ENCODE measurements at regions of chr22 and their contacts with region 1.

Region 1: DNA sequence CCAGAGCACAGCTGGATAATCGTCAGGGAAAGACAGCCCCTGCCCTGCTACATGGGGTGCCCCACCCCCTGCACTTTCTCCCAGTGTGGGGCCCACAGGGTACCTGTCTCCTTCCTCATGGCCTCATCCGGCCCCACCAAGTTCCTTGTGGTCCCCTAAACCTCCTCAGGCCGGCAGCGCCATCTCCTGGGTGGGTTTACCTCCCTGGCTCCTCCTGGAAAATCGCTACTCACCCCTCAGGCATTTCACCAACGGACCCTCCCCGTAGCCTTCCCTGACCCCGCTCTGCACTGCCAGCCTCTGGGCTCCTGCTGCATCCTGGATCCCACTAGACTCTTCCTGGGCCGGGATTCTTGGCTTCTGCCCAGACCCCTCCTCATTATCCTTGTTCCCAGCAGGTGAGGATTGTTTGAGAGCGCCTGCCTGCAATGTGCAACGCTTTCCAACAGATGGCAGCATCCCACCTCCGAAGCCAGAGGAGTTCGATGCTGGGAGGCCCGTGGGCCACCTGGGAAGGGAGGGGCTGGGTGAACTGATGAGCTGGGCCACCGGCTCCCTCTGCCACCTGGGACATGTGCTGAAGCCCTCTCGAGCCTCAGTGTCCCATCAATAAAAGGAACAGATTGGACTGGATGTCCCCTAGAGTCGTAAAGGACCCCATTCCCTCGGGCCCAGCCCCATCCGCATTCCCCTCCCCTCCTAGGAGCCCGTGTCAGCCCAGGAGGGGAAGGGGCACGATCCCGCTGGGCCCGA is 44.2 kb upstream of the TTLL12 start:
- DNase-seq: peak; percentile 77
- ATAC-seq: peak; percentile 90
- H3K4me3 Mint-ChIP-seq: no peak overlapping the region
- H3K27ac Mint-ChIP-seq: no peak overlapping the region
- H3K4me1 Mint-ChIP-seq: peaks cover 5% of the 10 kb centered on the region
- H3K27me3 Mint-ChIP-seq: no peaks in the 10 kb centered on the region
- CTCF ChIP-seq: peak; percentile 99

Region 2: DNA sequence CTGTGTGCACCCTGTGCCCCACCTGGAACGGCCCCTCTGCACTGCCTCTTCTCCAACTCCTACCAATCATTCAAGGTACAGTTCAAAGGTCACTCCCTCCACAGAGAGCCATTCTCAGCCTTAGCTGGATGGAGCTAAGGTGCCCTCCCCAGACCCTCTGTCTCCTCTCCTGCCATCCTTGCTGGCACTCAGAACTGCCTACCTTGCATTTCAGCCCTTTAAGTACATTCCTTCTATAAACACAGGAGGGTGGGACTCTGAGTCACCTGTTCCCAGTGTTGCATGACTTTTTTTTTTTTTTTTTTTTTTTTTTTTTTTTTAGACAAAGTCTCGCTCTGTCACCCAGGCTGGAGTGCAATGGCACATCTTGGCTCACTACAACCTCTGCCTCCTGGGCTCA is 150.5 kb before region 1 on chr22:
- CTCF ChIA-PET with region 1: no interaction called
- POLR2A ChIA-PET with region 1: no interaction called
- intact Hi-C with region 1: no loop called
- DNase-seq: no peak
- ATAC-seq: no peak
- H3K4me3 Mint-ChIP-seq: no peak overlapping the region
- H3K27ac Mint-ChIP-seq: no peak overlapping the region
- H3K4me1 Mint-ChIP-seq: peaks cover 7% of the 10 kb centered on the region
- H3K27me3 Mint-ChIP-seq: no peaks in the 10 kb centered on the region
- CTCF ChIP-seq: no peak

Region 3: GRCh38 chr22:43168416-43169309 is 62.5 kb before region 1 on chr22:
- CTCF ChIA-PET with region 1: no interaction called
- POLR2A ChIA-PET with region 1: no interaction called
- intact Hi-C with region 1: no loop called
- DNase-seq: no peak
- ATAC-seq: no peak
- H3K4me3 Mint-ChIP-seq: no peak overlapping the region
- H3K27ac Mint-ChIP-seq: no peak overlapping the region
- H3K4me1 Mint-ChIP-seq: no peaks in the 10 kb centered on the region
- H3K27me3 Mint-ChIP-seq: no peaks in the 10 kb centered on the region
- CTCF ChIP-seq: no peak

Region 4: GRCh38 chr22:43249789-43250471 is 18.8 kb after region 1 on chr22:
- CTCF ChIA-PET with region 1: interaction called, 16 read pairs
- POLR2A ChIA-PET with region 1: no interaction called
- intact Hi-C with region 1: no loop called
- DNase-seq: no peak
- ATAC-seq: no peak
- H3K4me3 Mint-ChIP-seq: no peak overlapping the region
- H3K27ac Mint-ChIP-seq: no peak overlapping the region
- H3K4me1 Mint-ChIP-seq: no peaks in the 10 kb centered on the region
- H3K27me3 Mint-ChIP-seq: no peaks in the 10 kb centered on the region
- CTCF ChIP-seq: no peak

Region 5: GRCh38 chr22:43313244-43313889 is 82.2 kb after region 1 on chr22:
- CTCF ChIA-PET with region 1: no interaction called
- POLR2A ChIA-PET with region 1: no interaction called
- intact Hi-C with region 1: no loop called
- DNase-seq: no peak
- ATAC-seq: no peak
- H3K4me3 Mint-ChIP-seq: no peak overlapping the region
- H3K27ac Mint-ChIP-seq: no peak overlapping the region
- H3K4me1 Mint-ChIP-seq: no peaks in the 10 kb centered on the region
- H3K27me3 Mint-ChIP-seq: no peaks in the 10 kb centered on the region
- CTCF ChIP-seq: no peak

Region 6: DNA sequence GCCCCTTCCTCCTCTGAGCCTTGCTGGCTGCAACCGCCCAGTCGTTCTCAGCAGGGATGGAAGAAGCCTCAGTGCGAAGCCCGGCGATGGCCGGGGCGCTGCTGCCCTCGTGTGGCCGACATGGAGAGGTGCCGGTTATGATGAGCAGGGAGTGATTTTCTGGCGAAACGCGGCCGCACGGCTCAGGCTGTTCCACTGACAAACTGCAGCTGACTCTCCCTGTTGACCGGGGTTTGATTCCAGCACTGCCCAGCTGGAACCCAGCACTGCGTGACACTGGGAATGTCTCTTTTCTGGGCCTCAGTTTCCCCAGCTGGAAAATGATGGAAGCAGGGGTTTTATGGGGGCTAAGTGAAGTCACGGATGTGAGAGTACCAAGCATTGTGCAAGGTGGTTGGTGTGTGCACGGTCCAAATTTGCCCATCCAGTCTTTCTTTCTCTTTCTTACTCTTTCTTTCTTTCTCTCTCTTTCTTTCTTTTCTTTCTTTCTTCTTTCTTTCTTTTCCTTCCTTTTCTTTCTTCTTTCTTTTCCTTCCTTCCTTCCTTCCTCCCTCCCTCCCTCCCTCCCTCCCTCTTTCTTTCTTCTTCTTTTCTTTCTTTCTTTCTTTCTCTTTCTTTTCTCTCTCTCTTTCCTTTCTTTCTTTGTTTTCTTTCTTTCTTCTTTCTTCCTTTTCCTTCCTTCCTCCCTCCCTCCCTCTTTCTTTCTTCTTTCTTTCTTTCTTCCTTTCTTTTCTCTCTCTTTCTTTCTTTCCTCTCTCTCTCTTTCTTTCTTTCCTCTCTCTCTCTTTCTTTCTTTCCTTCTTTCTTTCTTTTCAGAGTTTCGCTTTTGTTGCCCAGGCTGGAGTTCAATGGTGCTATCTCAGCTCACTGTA is 154.9 kb after region 1 on chr22:
- CTCF ChIA-PET with region 1: interaction called, 10 read pairs
- POLR2A ChIA-PET with region 1: no interaction called
- intact Hi-C with region 1: loop called (anchors 5 kb)
- DNase-seq: peak; percentile 78
- ATAC-seq: peak; percentile 89
- H3K4me3 Mint-ChIP-seq: no peak overlapping the region
- H3K27ac Mint-ChIP-seq: no peak overlapping the region
- H3K4me1 Mint-ChIP-seq: peaks cover 5% of the 10 kb centered on the region
- H3K27me3 Mint-ChIP-seq: peaks cover 23% of the 10 kb centered on the region
- CTCF ChIP-seq: peak; percentile 65

Measured in activated CD8-positive, alpha-beta T cell treated with anti-CD3 and anti-CD28 coated beads for 36 hours (primary cell).